A673 (cell line): ENCODE measurements at regions of chr20 and their contacts with region 1.

Region 1: GRCh38 chr20:33839566-33839965 is 28.4 kb downstream of the CHMP4B start:
- DNase-seq: no peak
- H3K4me3 ChIP-seq: no peak overlapping the region
- H3K27ac ChIP-seq: no peak overlapping the region
- H3K4me1 ChIP-seq: peaks cover 16% of the 10 kb centered on the region
- H3K27me3 ChIP-seq: no peaks in the 10 kb centered on the region
- CTCF ChIP-seq: no peak

Region 2: DNA sequence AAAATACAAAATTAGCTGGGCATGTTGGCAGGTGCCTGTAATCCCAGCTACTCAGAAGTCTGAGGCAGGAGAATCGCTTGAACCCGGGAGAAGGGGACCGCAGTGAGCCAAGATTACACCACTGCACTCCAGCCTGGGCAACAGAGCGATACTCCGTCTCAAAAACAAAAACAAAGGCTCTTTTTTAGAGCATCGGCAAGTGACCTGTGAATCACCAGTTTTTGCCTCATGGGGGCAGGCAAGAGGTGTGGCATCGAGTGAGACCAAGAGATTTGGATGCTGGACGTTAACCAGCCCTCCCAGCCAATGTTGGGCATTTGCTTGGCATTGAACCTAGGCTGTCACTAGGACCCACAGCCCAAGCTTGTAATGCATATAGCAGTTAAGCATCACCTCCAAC is 423.6 kb before region 1 on chr20:
- CTCF ChIA-PET with region 1: no interaction called
- POLR2A ChIA-PET with region 1: no interaction called
- intact Hi-C with region 1: no loop called
- DNase-seq: peak; percentile 45
- H3K4me3 ChIP-seq: no peak overlapping the region
- H3K27ac ChIP-seq: no peak overlapping the region
- H3K4me1 ChIP-seq: no peaks in the 10 kb centered on the region
- H3K27me3 ChIP-seq: no peaks in the 10 kb centered on the region
- CTCF ChIP-seq: peak; percentile 48

Region 3: GRCh38 chr20:33791959-33792597 is 47.5 kb before region 1 on chr20:
- CTCF ChIA-PET with region 1: no interaction called
- POLR2A ChIA-PET with region 1: no interaction called
- intact Hi-C with region 1: no loop called
- DNase-seq: peak; percentile 69
- H3K4me3 ChIP-seq: no peak overlapping the region
- H3K27ac ChIP-seq: no peak overlapping the region
- H3K4me1 ChIP-seq: no peaks in the 10 kb centered on the region
- H3K27me3 ChIP-seq: no peaks in the 10 kb centered on the region
- CTCF ChIP-seq: peak; percentile 84

Region 4: GRCh38 chr20:33954504-33954903 is 114.9 kb after region 1 on chr20:
- CTCF ChIA-PET with region 1: no interaction called
- POLR2A ChIA-PET with region 1: no interaction called
- intact Hi-C with region 1: no loop called
- DNase-seq: no peak
- H3K4me3 ChIP-seq: no peak overlapping the region
- H3K27ac ChIP-seq: no peak overlapping the region
- H3K4me1 ChIP-seq: no peaks in the 10 kb centered on the region
- H3K27me3 ChIP-seq: no peaks in the 10 kb centered on the region
- CTCF ChIP-seq: no peak

Region 5: DNA sequence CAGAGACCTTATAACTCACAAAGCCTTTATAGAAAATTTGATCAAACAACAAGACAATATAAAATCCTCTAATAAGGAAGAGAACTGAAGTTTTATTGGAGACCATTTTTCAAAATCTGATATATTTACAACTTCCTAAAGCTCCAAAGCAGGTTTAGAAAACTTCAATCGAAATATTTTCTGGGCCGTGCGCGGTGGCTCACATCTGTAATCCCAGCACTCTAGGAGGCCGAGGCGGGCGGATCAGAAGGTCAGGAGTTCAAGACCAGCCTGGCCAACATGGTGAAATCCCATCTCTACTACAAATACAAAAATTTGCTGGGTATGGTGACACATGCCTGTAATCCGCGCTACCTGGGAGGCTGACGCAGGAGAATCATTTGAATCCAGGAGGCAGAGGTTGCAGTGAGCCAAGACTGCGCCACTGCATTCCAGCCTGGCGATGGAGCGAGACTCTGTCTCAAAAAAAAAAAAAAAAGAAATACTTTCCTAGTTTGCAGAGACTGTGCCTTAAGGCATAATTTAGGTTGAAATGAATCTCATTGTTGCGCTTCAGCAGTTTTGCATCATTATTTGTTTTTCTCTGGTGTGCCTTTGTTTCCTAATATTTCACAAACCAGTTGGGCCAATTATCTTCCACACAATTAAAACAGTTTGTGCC is 341.0 kb after region 1 on chr20:
- CTCF ChIA-PET with region 1: no interaction called
- POLR2A ChIA-PET with region 1: no interaction called
- intact Hi-C with region 1: no loop called
- DNase-seq: no peak
- H3K4me3 ChIP-seq: no peak overlapping the region
- H3K27ac ChIP-seq: no peak overlapping the region
- H3K4me1 ChIP-seq: no peaks in the 10 kb centered on the region
- H3K27me3 ChIP-seq: no peaks in the 10 kb centered on the region
- CTCF ChIP-seq: no peak

Region 6: DNA sequence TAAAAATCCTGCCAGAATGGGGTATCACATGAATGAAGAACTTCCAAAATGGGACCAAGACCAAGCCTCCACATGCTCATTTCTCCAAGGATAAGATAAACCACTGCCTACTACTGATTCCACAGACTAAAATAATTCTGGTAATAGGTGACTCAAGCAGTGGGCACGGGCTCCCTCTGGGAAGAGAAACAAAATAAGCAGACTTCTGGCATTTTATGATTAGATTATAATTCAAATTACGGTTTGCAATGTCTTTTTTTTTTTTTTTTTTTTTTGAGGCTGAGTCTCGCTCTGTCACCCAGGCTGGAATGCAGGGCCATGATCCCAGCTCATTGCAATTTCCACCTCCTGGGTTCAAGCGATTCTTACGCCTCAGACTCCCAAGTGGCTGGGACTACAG is 1556.2 kb after region 1 on chr20:
- CTCF ChIA-PET with region 1: no interaction called
- POLR2A ChIA-PET with region 1: interaction called, 13 read pairs
- intact Hi-C with region 1: no loop called
- DNase-seq: no peak
- H3K4me3 ChIP-seq: no peak overlapping the region
- H3K27ac ChIP-seq: no peak overlapping the region
- H3K4me1 ChIP-seq: peaks cover 14% of the 10 kb centered on the region
- H3K27me3 ChIP-seq: no peaks in the 10 kb centered on the region
- CTCF ChIP-seq: no peak